GM10248 (cell line): ENCODE measurements at regions of chr2 and their contacts with region 1.

Region 1: GRCh38 chr2:241877989-241878970 is 8.8 kb downstream of the RTP5 start:
- DNase-seq: peak; percentile 78
- CTCF ChIP-seq: peak; percentile 92

Region 2: GRCh38 chr2:241859436-241860183 is 18.7 kb before region 1 on chr2:
- CTCF ChIA-PET with region 1: interaction called, 17 read pairs
- POLR2A ChIA-PET with region 1: no interaction called
- DNase-seq: peak; percentile 87
- CTCF ChIP-seq: peak; percentile 6

Region 3: DNA sequence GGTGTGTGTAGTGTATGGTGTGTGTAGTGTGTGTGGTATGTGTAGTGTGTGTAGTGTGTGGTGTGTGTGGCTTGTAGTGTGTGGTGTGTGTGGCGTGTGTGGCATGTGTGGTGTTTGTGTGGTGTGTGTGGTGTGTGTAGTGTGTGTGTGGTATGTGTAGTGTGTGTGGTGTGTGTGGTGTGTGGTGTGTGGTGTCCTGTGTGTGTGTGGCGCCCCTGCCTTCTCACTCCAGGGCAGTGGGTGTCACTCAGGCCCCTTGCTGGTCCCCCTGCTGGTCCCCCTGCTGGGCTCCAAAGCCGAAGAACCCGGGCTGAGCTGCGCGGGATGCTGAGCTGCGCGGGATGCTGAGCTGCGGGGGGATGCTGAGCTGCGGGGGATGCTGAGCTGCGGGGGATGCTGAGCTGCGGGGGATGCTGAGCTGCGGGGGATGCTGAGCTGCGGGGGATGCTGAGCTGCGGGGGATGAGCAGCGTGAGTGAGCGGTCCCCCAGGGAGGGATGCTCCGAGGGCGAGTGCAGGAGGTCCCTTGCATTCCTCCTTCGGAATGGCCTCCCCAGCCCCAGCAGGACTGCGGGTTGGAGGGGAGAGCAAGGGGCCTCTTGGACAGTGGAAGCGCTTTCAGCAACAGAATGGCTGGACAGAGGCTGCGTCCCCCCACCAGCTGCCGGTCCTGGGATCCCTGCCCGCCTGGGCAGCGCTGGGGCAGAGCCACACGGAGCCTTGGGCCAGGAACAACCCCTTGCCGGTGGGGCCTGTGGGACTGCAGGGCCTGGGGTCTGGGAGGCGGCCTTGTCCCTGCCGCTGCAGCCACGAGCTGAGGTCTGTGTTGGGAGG is 12.1 kb before region 1 on chr2:
- CTCF ChIA-PET with region 1: interaction called, 41 read pairs
- POLR2A ChIA-PET with region 1: no interaction called
- DNase-seq: no peak
- CTCF ChIP-seq: no peak

Region 4: GRCh38 chr2:241895712-241896641 is 17.7 kb after region 1 on chr2:
- CTCF ChIA-PET with region 1: no interaction called
- POLR2A ChIA-PET with region 1: no interaction called
- DNase-seq: no peak
- CTCF ChIP-seq: no peak